Activated naive CD4-positive, alpha-beta T cell treated with anti-CD3 and anti-CD28 coated beads, Interleukin-2, amount 10 ng/mL, durations not matched to agents 7 days and 5 days (primary cell): ENCODE measurements at regions of chr17 and their contacts with region 1.

Region 1: GRCh38 chr17:48636177-48637018 is 10.2 kb upstream of the HOXB9 start:
- DNase-seq: peak; percentile 82
- H3K4me3 Mint-ChIP-seq: no peak overlapping the region
- H3K27ac Mint-ChIP-seq: no peak overlapping the region
- H3K4me1 Mint-ChIP-seq: peaks cover 19% of the 10 kb centered on the region
- H3K27me3 Mint-ChIP-seq: peaks cover 100% of the 10 kb centered on the region

Region 2: GRCh38 chr17:48618256-48618897 is 18.0 kb before region 1 on chr17:
- CTCF ChIA-PET with region 1: interaction called, 12 read pairs
- DNase-seq: peak; percentile 87
- H3K4me3 Mint-ChIP-seq: peak overlapping the region; percentile 41
- H3K27ac Mint-ChIP-seq: peak overlapping the region; percentile 80
- H3K4me1 Mint-ChIP-seq: peaks cover 35% of the 10 kb centered on the region
- H3K27me3 Mint-ChIP-seq: peaks cover 100% of the 10 kb centered on the region

Region 3: GRCh38 chr17:48625495-48626244 is 10.7 kb before region 1 on chr17:
- CTCF ChIA-PET with region 1: interaction called, 13 read pairs
- DNase-seq: peak; percentile 49
- H3K4me3 Mint-ChIP-seq: peak overlapping the region; percentile 64
- H3K27ac Mint-ChIP-seq: no peak overlapping the region
- H3K4me1 Mint-ChIP-seq: peaks cover 17% of the 10 kb centered on the region
- H3K27me3 Mint-ChIP-seq: peaks cover 100% of the 10 kb centered on the region

Region 4: GRCh38 chr17:48769009-48769675 is 132.7 kb after region 1 on chr17:
- CTCF ChIA-PET with region 1: no interaction called
- DNase-seq: no peak
- H3K4me3 Mint-ChIP-seq: no peak overlapping the region
- H3K27ac Mint-ChIP-seq: no peak overlapping the region
- H3K4me1 Mint-ChIP-seq: no peaks in the 10 kb centered on the region
- H3K27me3 Mint-ChIP-seq: peaks cover 61% of the 10 kb centered on the region

Region 5: DNA sequence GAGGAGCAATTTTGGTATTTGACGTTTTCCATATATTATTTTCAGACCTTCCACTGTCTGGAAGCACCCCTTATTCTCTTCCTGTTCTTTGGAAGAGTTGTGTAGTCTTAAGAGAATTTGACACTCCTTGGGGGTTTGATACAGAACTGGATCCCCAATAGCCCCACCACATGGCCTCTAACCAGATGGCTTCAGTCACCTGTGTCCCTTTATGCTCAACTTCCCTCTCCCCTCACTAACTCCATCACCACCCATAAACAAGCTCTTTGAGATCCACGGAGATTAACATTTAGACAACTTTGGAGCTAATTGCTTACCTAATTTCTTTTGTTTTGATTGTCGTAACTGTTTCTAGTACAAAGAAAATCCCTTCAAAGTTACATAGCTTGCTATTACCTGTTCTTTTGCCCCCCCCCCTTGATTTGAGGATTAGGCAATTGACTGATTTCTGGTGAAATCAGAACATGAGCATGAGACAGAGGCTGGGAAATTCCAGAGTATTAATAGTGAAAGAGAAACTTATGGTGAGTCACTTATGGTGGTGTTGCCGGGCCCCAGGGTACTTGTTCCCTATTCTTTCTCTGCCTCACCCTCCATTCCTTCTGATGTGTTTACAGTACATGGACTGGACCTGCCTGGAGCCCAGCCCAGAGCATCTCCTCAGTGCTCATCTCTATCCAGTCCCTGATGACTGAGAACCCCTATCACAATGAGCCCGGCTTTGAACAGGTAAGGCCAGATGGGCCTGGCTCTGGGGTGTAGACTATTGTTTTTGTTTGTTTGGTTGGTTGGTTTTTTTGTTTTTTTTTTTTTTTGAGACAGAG is 279.3 kb after region 1 on chr17:
- CTCF ChIA-PET with region 1: no interaction called
- DNase-seq: peak; percentile 50
- H3K4me3 Mint-ChIP-seq: peak overlapping the region; percentile 32
- H3K27ac Mint-ChIP-seq: peak overlapping the region; percentile 87
- H3K4me1 Mint-ChIP-seq: peaks cover 52% of the 10 kb centered on the region
- H3K27me3 Mint-ChIP-seq: no peaks in the 10 kb centered on the region